ENCODE measurements at regions of chr18 and their contacts with region 1.

Region 1: GRCh38 chr18:24726727-24727492 is 266.5 kb downstream of the HRH4 start:
- DNase-seq: peak; percentile 77
- H3K4me3 ChIP-seq: no peak overlapping the region
- H3K27ac ChIP-seq: no peak overlapping the region
- H3K4me1 ChIP-seq: no peaks in the 10 kb centered on the region
- H3K27me3 ChIP-seq: peaks cover 43% of the 10 kb centered on the region
- CTCF ChIP-seq: peak; percentile 92

Region 2: GRCh38 chr18:24362758-24363157 is 364.2 kb before region 1 on chr18:
- CTCF ChIA-PET with region 1: interaction called, 5 read pairs
- POLR2A ChIA-PET with region 1: no interaction called
- intact Hi-C with region 1: loop called (anchors 5 kb)
- DNase-seq: no peak
- H3K4me3 ChIP-seq: no peak overlapping the region
- H3K27ac ChIP-seq: no peak overlapping the region
- H3K4me1 ChIP-seq: no peaks in the 10 kb centered on the region
- H3K27me3 ChIP-seq: no peaks in the 10 kb centered on the region
- CTCF ChIP-seq: no peak

Region 3: DNA sequence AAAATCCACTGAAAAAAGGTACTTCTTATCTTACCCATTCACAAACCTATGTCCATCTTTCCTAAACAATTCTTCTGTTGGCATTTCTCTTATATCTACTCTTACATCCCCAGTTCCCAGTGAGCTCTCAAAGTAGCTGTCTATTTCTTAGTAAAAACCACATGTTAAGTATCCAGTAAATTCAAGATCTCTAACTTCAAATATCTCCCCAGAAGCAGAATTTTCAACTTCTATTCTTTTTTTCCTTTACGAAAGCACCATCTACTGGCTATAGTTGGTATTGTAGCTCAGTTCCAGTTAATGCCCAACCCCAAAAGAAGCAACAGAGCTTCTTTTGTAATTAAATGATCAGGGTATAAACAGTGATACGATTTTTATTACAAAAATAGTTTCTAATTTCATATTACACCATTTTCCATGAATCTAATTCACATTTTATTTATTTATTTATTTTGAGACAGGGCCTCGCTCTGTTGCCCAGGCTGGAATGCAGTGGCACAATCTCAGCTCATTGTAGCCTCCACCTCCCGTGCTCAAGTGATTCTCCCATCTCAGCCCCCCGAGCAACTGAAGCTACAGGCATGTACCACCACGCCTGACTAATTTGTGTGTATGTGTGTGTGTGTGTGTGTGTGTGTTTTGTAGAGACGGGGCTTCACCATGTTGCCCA is 238.0 kb before region 1 on chr18:
- CTCF ChIA-PET with region 1: interaction called, 12 read pairs
- POLR2A ChIA-PET with region 1: no interaction called
- intact Hi-C with region 1: loop called (anchors 1 kb)
- DNase-seq: peak; percentile 59
- H3K4me3 ChIP-seq: no peak overlapping the region
- H3K27ac ChIP-seq: no peak overlapping the region
- H3K4me1 ChIP-seq: no peaks in the 10 kb centered on the region
- H3K27me3 ChIP-seq: peaks cover 5% of the 10 kb centered on the region
- CTCF ChIP-seq: peak; percentile 73

Region 4: DNA sequence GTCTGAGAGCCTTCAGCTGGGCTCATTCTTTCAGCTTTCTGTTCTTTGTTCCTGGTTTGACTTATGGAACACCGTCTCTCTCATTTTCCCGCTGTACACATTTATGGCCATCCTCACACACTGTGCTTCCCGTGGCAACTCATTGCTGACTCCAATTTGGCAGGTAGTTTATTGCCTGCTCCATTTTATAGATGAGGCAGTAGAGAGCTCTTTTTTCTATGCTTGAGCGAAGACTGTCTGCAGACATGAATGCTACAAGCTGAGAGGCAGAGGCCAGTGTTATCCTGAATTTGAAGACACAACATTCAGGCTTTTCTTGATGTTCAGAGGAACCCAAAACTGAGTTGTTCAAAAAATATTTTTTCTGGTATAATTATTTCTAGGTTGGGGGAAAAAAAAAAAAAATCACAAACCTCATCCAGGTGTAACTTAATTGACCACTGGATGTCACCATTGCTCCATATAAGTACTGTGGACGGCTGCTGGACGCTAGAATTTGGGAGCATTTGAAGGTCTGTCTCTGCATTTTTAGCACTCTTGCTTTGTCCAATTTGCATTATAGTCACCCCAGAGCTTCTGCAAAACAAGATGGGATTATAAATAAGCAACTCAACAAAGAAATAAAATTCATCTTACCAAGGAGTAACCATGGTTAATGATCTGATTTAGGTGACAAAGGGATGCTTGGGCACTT is 183.0 kb before region 1 on chr18:
- CTCF ChIA-PET with region 1: interaction called, 4 read pairs
- POLR2A ChIA-PET with region 1: no interaction called
- intact Hi-C with region 1: loop called (anchors 5 kb)
- DNase-seq: peak; percentile 27
- H3K4me3 ChIP-seq: no peak overlapping the region
- H3K27ac ChIP-seq: no peak overlapping the region
- H3K4me1 ChIP-seq: no peaks in the 10 kb centered on the region
- H3K27me3 ChIP-seq: no peaks in the 10 kb centered on the region
- CTCF ChIP-seq: peak; percentile 46

Region 5: DNA sequence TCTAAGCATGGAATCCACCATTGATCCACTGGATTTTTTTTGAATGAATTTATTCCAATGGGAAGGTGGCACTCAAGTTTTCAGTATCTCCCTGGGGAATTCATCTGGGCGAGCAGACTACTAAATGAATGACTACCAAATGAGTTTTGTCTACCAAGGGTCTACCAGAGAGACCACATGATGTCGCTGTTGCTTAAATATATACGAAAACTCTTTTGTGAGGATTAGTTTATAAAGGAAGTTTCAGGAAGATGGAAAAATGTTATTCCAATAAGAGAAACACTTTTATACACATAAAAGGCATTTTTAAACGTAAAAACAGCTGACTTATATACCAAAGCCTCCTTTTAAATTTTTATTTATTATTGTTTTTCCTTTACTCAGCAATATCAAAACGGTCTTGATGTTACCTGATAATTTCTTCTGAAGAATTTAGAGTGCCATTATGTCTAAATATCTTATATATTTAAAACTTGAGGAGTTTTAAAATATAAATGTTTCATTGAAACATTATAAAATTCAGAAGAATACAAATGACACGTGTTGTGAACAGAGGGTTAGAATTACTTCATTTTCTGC is 126.7 kb before region 1 on chr18:
- CTCF ChIA-PET with region 1: no interaction called
- POLR2A ChIA-PET with region 1: no interaction called
- intact Hi-C with region 1: loop called (anchors 1 kb)
- DNase-seq: peak; percentile 81
- H3K4me3 ChIP-seq: no peak overlapping the region
- H3K27ac ChIP-seq: no peak overlapping the region
- H3K4me1 ChIP-seq: no peaks in the 10 kb centered on the region
- H3K27me3 ChIP-seq: peaks cover 39% of the 10 kb centered on the region
- CTCF ChIP-seq: peak; percentile 73

Measured in A673 (cell line).